Naive thymus-derived CD8-positive, alpha-beta T cell (primary cell): ENCODE measurements at regions of chr11 and their contacts with region 1.

Region 1: DNA sequence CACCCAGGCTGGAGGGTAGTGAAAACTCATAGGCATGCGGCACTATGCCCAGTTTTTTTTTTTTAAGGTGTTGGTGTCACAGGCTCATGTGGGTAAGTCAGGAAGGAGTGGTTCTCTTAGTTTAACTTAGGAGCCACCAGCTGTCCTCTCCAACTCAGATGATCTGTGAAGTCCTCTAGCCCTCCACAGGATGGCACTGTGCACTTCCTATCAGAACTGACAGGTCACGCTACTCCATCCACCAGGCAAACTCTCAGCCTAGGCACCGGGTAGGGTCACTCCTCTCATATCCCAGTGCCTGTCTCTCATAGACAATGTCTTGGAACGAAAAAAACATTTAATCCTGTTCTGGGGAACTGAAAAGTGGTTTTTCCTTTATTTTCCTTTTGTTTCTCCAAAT is 16.5 kb downstream of the NAP1L4 start:
- DNase-seq: peak; percentile 21 to 78 (median 54)
- ATAC-seq: peak; percentile 91 to 96
- H3K4me3 Mint-ChIP-seq: peak overlapping the region in 2 of 10 donors; percentile 14 to 22
- H3K27ac Mint-ChIP-seq: peak overlapping the region in 8 of 10 donors; percentile 35 to 87 (median 68)
- H3K4me1 Mint-ChIP-seq: peaks cover 21 to 62% (median 52%) of the 10 kb centered on the region in 4 donors
- H3K27me3 Mint-ChIP-seq: no peaks in the 10 kb centered on the region

Region 2: GRCh38 chr11:3014057-3014938 is 38.7 kb after region 1 on chr11:
- POLR2A ChIA-PET with region 1: interaction called, 35 read pairs
- DNase-seq: peak; percentile 65 to 97 (median 90)
- ATAC-seq: peak; percentile 84 to 90
- H3K4me3 Mint-ChIP-seq: peak overlapping the region; percentile 55 to 80 (median 68)
- H3K27ac Mint-ChIP-seq: peak overlapping the region; percentile 82 to 98 (median 95)
- H3K4me1 Mint-ChIP-seq: peaks cover 19 to 92% (median 70%) of the 10 kb centered on the region in 4 donors
- H3K27me3 Mint-ChIP-seq: no peaks in the 10 kb centered on the region

Region 3: GRCh38 chr11:3021125-3021524 is 45.5 kb after region 1 on chr11:
- POLR2A ChIA-PET with region 1: interaction called, 35 read pairs
- DNase-seq: peak; percentile 26 to 80 (median 56)
- ATAC-seq: peak; percentile 83
- H3K4me3 Mint-ChIP-seq: peak overlapping the region in 1 of 10 donors; percentile 10
- H3K27ac Mint-ChIP-seq: peak overlapping the region in 6 of 10 donors; percentile 41 to 73 (median 68)
- H3K4me1 Mint-ChIP-seq: peaks cover 23 to 68% (median 60%) of the 10 kb centered on the region in 4 donors
- H3K27me3 Mint-ChIP-seq: no peaks in the 10 kb centered on the region